Activated CD4-positive, alpha-beta T cell treated with anti-CD3 and anti-CD28 coated beads for 36 hours (primary cell): ENCODE measurements at regions of chr14 and their contacts with region 1.

Region 1: GRCh38 chr14:67111022-67111421 is 78.2 kb upstream of the GARIN2 start:
- DNase-seq: no peak
- ATAC-seq: no peak
- H3K4me3 Mint-ChIP-seq: no peak overlapping the region
- H3K27ac Mint-ChIP-seq: no peak overlapping the region
- H3K4me1 Mint-ChIP-seq: no peaks in the 10 kb centered on the region
- H3K27me3 Mint-ChIP-seq: no peaks in the 10 kb centered on the region

Region 2: GRCh38 chr14:66624299-66624937 is 486.6 kb before region 1 on chr14:
- CTCF ChIA-PET with region 1: no interaction called
- POLR2A ChIA-PET with region 1: no interaction called
- intact Hi-C with region 1: loop called in 1 of 2 experiments (anchors 10 kb)
- DNase-seq: peak; percentile 61
- ATAC-seq: peak; percentile 72
- H3K4me3 Mint-ChIP-seq: no peak overlapping the region
- H3K27ac Mint-ChIP-seq: no peak overlapping the region
- H3K4me1 Mint-ChIP-seq: no peaks in the 10 kb centered on the region
- H3K27me3 Mint-ChIP-seq: no peaks in the 10 kb centered on the region

Region 3: GRCh38 chr14:66746316-66747006 is 364.6 kb before region 1 on chr14:
- CTCF ChIA-PET with region 1: no interaction called
- POLR2A ChIA-PET with region 1: no interaction called
- intact Hi-C with region 1: loop called in 1 of 2 experiments (anchors 10 kb)
- DNase-seq: peak; percentile 7
- ATAC-seq: no peak
- H3K4me3 Mint-ChIP-seq: no peak overlapping the region
- H3K27ac Mint-ChIP-seq: no peak overlapping the region
- H3K4me1 Mint-ChIP-seq: peaks cover 2% of the 10 kb centered on the region
- H3K27me3 Mint-ChIP-seq: no peaks in the 10 kb centered on the region